SK-N-SH (cell line): ENCODE measurements at regions of chr14 and their contacts with region 1.

Region 1: DNA sequence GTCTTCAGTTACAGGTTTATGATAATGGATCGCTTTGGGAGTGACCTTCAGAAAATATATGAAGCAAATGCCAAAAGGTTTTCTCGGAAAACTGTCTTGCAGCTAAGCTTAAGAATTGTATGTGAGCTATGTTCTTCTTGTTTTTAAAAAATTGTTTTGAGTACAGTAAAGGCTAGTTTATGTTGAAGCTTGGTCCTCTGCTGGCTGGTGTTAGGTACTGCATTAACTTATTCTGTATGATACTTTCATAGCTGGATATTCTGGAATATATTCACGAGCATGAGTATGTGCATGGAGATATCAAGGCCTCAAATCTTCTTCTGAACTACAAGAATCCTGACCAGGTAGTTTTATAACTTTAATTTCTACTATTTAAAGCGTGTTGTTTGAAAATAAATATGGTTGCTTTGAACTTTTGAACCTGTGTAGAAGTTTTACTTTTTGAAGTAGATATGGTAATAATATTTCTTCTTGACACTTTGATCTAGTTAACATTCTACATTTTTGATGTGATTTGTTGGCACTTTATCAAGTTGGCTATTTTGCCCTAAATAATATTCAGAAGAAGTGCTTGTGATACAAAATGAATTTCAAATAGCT is 55.7 kb downstream of the VRK1 start:
- DNase-seq: peak; percentile 16
- H3K4me3 ChIP-seq: no peak overlapping the region
- H3K27ac ChIP-seq: no peak overlapping the region
- H3K4me1 ChIP-seq: peaks cover 0 to 8% of the 10 kb centered on the region in 2 experiments; a peak in 1 of 4 replicates
- H3K27me3 ChIP-seq: no peaks in the 10 kb centered on the region
- CTCF ChIP-seq: peak; percentile 82
- EP300 ChIP-seq: no peak
- RAD21 ChIP-seq: peak; percentile 66

Region 2: DNA sequence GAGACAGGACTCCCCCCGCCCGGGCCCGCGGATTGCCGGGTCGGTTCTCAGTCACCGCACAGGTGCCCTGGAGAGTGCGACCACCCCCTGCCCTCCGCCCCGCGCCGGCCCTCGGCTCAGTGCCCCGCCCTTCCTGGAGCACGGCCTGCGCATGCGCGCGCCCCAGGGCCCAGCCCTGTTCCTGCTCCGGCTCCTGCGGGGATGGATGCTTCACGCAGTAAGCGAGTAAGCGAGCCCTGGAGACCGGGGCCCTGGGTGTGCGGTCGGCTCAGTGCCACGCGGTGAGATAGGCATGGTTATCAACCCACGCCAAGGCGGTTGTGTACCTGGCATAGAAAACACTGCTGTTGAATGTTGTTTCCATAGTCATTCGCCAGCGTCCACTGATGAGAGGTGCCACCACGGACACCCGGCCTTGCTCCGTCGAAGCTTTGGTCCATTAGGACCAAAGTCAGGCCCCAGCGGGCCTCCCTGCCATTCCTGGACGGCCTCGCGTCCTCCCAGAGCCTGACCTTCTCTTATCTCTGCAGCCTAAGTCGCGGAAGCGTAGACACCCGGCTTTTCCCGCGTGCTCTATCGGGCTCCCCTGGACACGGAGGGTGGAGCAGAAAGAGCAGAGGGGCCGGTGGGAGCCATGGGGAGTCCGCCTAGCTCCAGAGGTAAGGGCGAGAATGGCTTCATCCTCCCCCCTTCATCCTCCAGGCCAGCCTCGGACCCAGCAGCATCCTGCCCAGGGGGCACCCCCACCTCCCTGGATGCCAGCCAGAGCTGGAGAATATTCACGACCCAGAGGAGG is 260.1 kb before region 1 on chr14:
- CTCF ChIA-PET with region 1: interaction called, 11 read pairs
- POLR2A ChIA-PET with region 1: no interaction called
- DNase-seq: peak; percentile 96
- H3K4me3 ChIP-seq: peak overlapping the region; percentile 50 to 58
- H3K27ac ChIP-seq: no peak overlapping the region
- H3K4me1 ChIP-seq: peaks cover 0 to 12% of the 10 kb centered on the region in 2 experiments; a peak in 1 of 4 replicates
- H3K27me3 ChIP-seq: no peaks in the 10 kb centered on the region
- CTCF ChIP-seq: no peak
- EP300 ChIP-seq: no peak
- RAD21 ChIP-seq: no peak

Region 3: GRCh38 chr14:96639550-96639949 is 213.4 kb before region 1 on chr14:
- CTCF ChIA-PET with region 1: no interaction called
- POLR2A ChIA-PET with region 1: no interaction called
- DNase-seq: no peak
- H3K4me3 ChIP-seq: no peak overlapping the region
- H3K27ac ChIP-seq: no peak overlapping the region
- H3K4me1 ChIP-seq: no peaks in the 10 kb centered on the region; a peak in 1 of 4 replicates
- H3K27me3 ChIP-seq: no peaks in the 10 kb centered on the region
- CTCF ChIP-seq: no peak
- EP300 ChIP-seq: no peak
- RAD21 ChIP-seq: no peak

Region 4: GRCh38 chr14:96741151-96741977 is 111.6 kb before region 1 on chr14:
- CTCF ChIA-PET with region 1: interaction called, 15 read pairs
- POLR2A ChIA-PET with region 1: no interaction called
- DNase-seq: peak; percentile 91
- H3K4me3 ChIP-seq: peak overlapping the region; percentile 57 to 72
- H3K27ac ChIP-seq: no peak overlapping the region
- H3K4me1 ChIP-seq: peaks cover 0 to 3% of the 10 kb centered on the region in 2 experiments; a peak in 1 of 4 replicates
- H3K27me3 ChIP-seq: peaks cover 17% of the 10 kb centered on the region; the same call in 1 of the 2 replicates
- CTCF ChIP-seq: peak; percentile 77
- EP300 ChIP-seq: no peak
- RAD21 ChIP-seq: peak; percentile 79

Region 5: DNA sequence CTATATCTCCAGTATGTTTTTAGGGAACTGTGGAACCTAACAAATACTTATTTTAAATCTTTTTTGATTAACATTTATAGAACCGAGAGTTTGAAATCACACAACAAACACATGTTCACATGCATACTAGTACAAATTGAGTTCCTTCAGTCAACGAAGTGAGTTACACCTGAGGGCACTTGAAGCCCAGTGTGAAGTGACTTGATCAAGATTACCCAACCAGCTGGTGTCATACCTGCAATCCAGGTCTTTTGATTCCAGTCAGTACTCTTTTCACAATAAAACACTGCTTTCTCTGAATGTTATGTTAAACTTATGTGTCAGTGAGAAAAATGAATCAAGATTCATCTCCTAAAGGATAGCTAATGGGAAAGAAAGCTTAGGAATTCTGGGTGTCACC is 20.6 kb before region 1 on chr14:
- CTCF ChIA-PET with region 1: interaction called, 24 read pairs
- POLR2A ChIA-PET with region 1: no interaction called
- DNase-seq: no peak
- H3K4me3 ChIP-seq: no peak overlapping the region
- H3K27ac ChIP-seq: no peak overlapping the region
- H3K4me1 ChIP-seq: no peaks in the 10 kb centered on the region; a peak in 1 of 4 replicates
- H3K27me3 ChIP-seq: no peaks in the 10 kb centered on the region
- CTCF ChIP-seq: no peak
- EP300 ChIP-seq: no peak
- RAD21 ChIP-seq: no peak

Region 6: GRCh38 chr14:96874127-96874526 is 21.2 kb after region 1 on chr14:
- CTCF ChIA-PET with region 1: interaction called, 22 read pairs
- POLR2A ChIA-PET with region 1: no interaction called
- DNase-seq: no peak
- H3K4me3 ChIP-seq: no peak overlapping the region
- H3K27ac ChIP-seq: no peak overlapping the region
- H3K4me1 ChIP-seq: no peaks in the 10 kb centered on the region; a peak in 1 of 4 replicates
- H3K27me3 ChIP-seq: no peaks in the 10 kb centered on the region
- CTCF ChIP-seq: no peak
- EP300 ChIP-seq: no peak
- RAD21 ChIP-seq: no peak

Region 7: DNA sequence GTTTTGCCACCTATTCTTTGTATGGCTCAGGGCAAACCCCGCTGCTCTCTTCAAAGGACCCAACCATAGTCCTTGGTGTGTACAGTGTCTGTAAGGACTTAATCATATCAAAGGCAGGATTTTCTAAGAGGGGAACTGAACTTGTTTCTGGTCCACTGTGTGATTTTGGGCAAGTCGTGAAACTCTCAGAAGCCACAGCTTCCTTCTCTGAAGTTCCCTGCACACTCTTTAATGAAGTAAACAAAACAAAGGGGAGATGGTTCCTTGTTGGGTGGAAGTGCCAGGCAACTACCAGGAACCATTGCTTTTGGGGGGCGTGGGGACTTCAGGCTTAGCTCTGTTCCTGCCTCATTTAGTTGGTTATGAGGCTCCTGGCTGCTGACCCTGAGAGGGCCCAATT is 96.7 kb after region 1 on chr14:
- CTCF ChIA-PET with region 1: no interaction called
- POLR2A ChIA-PET with region 1: no interaction called
- DNase-seq: no peak
- H3K4me3 ChIP-seq: no peak overlapping the region
- H3K27ac ChIP-seq: no peak overlapping the region
- H3K4me1 ChIP-seq: peaks cover 0 to 4% of the 10 kb centered on the region in 2 experiments; a peak in 1 of 4 replicates
- H3K27me3 ChIP-seq: no peaks in the 10 kb centered on the region
- CTCF ChIP-seq: no peak
- EP300 ChIP-seq: no peak
- RAD21 ChIP-seq: no peak